ENCODE measurements at regions of chrX and their contacts with region 1.

Region 1: GRCh38 chrX:108117988-108118387 is 26.4 kb downstream of the ATG4A start:
- DNase-seq: no peak
- ATAC-seq: no peak

Region 2: GRCh38 chrX:106919932-106920452 is 1198.0 kb before region 1 on chrX and contains the start of gene CLDN2:
- intact Hi-C with region 1: no loop called
- DNase-seq: no peak
- ATAC-seq: no peak
- total RNA-seq, gene CLDN2: not detected

Region 3: DNA sequence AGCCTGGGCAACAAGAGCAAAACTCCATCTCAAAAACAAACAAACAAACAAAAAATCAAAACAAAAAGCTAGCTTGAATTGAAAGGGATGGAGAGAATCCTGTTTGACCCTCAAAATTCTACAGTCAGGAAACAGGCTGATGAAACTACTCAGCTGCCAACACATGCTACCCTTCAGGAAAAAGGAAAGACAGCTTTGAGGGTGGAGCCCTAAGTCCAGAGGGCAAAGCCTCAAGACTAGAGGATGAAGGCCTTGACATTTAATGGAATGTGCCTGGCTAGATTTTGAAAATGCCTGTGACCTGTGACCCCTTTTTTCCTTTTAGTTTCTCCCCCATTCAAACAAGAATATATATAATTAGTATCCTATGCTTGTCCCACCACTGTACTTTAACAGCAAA is 1145.1 kb before region 1 on chrX:
- intact Hi-C with region 1: no loop called
- DNase-seq: no peak
- ATAC-seq: no peak

Region 4: DNA sequence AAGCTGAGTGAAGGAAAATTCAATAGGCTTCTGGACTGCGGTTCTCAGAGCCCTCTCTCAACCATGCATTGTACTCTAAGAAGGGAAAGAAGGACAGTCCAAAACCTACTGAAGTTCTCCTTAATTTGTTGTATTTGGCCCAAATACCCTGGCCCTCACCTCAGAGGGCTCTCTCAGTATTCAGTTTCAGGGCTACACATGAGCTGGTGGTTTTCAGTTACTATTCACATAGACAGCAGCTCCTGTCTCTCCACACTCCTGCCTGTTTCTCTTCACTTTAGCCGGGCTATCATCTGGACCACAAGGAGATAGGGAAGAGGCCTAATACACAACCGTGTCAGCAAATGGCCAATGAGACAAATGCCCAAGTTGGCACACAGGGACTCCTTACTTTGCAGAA is 39.6 kb after region 1 on chrX:
- intact Hi-C with region 1: loop called (anchors 1 kb)
- DNase-seq: no peak
- ATAC-seq: no peak

Measured in sciatic nerve (tissue), 2 donors.